ENCODE measurements at regions of chr11 and their contacts with region 1.

Region 1: DNA sequence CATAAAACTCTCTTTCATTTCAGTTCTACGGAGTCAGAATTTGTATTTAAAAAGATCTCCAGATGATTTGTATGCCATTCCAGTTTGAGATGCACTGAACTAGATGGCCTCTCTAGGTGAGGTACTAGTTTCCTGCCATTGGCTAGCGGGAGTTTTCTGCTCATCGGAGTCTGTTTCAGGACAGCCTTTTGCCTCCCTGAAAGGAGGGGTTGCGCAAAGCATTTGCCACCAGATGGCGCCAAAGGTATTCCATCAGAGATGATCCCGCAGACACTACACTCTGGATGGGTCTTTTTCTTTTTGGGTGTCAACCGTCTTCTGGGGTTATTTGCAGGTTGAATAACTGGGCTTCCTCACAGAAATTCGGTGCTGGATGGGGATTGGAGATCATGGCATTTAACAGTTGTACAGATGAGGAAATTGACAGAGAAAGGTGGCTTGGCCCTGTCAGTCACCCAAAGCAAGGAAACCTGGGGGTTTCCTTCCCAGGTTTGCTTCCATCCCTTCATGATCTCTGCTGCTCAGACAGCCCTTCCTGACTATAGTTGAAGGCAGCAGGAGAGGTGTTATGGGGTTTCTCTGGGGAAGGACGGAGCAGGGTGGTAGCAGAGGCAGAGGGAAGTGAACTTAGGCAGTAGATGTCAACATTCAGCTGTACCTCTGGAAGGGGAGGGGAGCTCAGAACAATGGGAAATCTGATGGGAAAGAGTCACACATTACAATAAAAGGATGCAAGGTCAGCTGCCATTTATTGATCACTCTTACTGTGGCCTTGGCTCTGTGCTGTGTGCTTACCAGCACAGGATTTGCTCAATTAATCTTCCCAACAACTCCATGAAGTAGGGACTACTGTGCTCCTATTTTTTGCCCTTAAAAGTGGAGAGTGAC is 81.6 kb downstream of the CCDC81 start:
- DNase-seq: peak; percentile 78
- ATAC-seq: peak; percentile 82

Region 2: GRCh38 chr11:86431258-86431657 is 25.0 kb before region 1 on chr11:
- intact Hi-C with region 1: no loop called
- DNase-seq: peak; percentile 75
- ATAC-seq: no peak

Region 3: DNA sequence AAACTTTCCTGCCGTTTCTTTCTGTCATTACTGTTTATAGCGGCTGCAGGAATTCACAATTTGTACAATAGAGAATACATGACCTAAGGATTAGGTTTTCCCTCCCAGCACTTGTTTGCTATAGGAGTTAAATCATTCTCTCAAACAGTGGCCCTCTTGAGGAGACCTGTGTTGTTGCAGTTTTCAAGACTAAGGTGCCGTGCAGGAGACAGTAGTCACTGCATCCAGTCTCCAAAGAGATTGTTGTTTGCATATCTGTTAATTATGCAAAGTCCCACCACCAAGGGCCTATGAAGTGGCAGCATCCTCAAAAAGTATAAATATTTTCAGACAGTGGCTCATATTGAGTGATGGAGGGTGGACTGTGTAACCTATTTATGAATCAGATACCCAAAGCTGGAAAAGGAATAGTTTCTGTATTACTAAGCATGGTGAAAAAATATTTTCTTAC is 346.3 kb after region 1 on chr11:
- intact Hi-C with region 1: loop called (anchors 5 kb)
- DNase-seq: no peak
- ATAC-seq: no peak

Region 4: DNA sequence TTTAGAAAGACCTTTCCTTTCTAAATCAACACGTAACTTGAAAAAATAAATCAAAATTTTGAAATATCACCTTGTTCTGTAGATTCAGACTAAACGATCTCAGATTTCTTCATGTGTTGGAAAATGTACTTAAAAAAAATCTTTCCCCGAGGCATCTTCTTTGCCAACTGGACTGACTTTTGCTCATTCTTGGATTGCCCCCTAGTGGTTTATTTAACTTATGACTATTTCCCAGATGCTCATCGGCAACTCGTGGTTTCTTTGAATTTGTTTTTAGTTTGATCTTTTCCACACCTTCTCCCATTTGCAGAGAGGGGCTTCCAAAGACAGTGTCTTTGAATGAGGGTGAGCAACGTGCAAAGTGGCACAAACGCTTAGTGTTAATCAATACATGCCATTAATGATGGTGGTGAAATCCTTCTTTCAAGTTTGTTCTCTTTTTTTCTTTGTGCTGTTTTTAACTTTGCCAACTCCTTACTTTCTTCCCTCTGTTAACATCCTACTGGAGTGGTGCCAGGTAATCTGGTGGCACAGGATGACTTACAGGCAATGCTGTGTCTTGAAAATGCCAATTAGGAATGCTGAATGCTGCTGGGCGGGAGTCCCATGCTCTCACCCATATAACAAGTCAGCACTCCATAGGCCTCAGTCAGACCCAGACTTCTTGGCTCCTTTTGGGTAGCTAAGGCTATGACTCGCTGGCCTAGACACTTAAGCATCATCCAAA is 362.3 kb after region 1 on chr11:
- intact Hi-C with region 1: loop called (anchors 1 kb)
- DNase-seq: no peak
- ATAC-seq: no peak

Measured in Right ventricle myocardium inferior (tissue), 1 donor.